Transverse colon (tissue), 4 donors: ENCODE measurements at regions of chr6 and their contacts with region 1.

Region 1: DNA sequence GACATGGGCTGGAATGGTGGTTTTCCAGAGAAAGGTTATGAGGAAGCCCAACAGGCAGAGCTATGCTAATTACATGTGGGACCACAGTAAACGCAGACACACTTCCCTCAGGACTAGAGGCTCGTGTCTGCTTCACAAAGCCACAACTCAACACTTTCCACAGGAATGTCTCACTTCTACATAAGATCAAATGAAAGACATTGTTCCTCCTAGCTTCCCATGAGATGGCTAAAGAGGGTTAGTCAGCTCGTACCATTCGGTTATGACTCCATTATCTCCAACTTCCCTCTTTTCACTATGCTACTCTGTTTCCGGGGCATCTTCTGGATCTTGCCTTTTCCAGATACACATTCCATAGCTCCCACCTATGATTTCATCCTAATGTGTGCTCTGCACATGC is 29.1 kb upstream of the ZC3H12D start:
- DNase-seq: no peak
- H3K4me3 ChIP-seq: no peak overlapping the region
- H3K27ac ChIP-seq: no peak overlapping the region
- H3K4me1 ChIP-seq: peaks cover 0 to 8% (median 4%) of the 10 kb centered on the region in 4 donors
- H3K27me3 ChIP-seq: no peaks in the 10 kb centered on the region
- CTCF ChIP-seq: no peak
- EP300 ChIP-seq: no peak
- POLR2A ChIP-seq: no peak

Region 2: DNA sequence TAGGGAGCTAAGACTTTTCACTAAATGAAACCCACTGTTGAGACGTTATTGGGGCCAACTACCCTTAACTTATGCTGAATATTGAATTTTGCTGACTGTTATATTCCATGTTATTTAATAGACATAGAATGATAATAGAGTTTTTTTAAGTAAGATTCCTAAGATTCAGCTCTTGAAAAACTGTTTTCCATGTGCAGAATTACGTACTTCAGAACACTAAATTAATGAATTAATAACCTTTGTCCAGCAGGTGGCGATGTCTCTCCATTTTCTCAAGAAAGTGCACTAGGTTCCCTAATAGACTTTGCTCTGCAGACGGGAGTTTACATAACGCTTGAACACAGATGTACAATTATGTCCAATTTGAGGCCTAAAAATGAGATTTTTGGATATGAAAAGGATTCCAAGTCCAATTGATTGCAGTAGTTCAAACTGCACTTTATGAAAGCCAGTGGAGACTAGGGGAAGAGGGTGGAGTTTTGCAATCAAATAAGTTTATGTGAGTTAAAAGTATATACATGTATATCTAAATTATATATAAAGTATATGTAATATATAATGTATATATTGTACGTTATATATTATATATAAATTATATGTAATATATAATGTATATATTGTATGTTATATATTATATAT is 485.0 kb before region 1 on chr6:
- in situ Hi-C with region 1: loop called in 1 of 4 experiments (anchors 10 kb)
- intact Hi-C with region 1: loop called (anchors 5 kb)
- DNase-seq: peak; percentile 64
- H3K4me3 ChIP-seq: no peak overlapping the region
- H3K27ac ChIP-seq: no peak overlapping the region
- H3K4me1 ChIP-seq: peaks cover 0 to 13% (median 9%) of the 10 kb centered on the region in 4 donors
- H3K27me3 ChIP-seq: no peaks in the 10 kb centered on the region
- CTCF ChIP-seq: peak; percentile 71 to 91 (median 76)
- EP300 ChIP-seq: no peak
- POLR2A ChIP-seq: no peak

Region 3: GRCh38 chr6:149082286-149082707 is 431.6 kb before region 1 on chr6:
- in situ Hi-C with region 1: loop called in 1 of 4 experiments (anchors 25 kb)
- intact Hi-C with region 1: no loop called
- DNase-seq: peak; percentile 87
- H3K4me3 ChIP-seq: no peak overlapping the region
- H3K27ac ChIP-seq: no peak overlapping the region
- H3K4me1 ChIP-seq: peaks cover 4 to 25% (median 8%) of the 10 kb centered on the region in 4 donors
- H3K27me3 ChIP-seq: no peaks in the 10 kb centered on the region
- CTCF ChIP-seq: peak; percentile 76 to 82 (median 80)
- EP300 ChIP-seq: no peak
- POLR2A ChIP-seq: no peak

Region 4: GRCh38 chr6:149094156-149094555 is 419.8 kb before region 1 on chr6:
- in situ Hi-C with region 1: loop called in 1 of 4 experiments (anchors 25 kb)
- intact Hi-C with region 1: loop called (anchors 5 kb)
- DNase-seq: no peak
- H3K4me3 ChIP-seq: no peak overlapping the region
- H3K27ac ChIP-seq: no peak overlapping the region
- H3K4me1 ChIP-seq: peaks cover 0 to 7% (median 2%) of the 10 kb centered on the region in 4 donors
- H3K27me3 ChIP-seq: no peaks in the 10 kb centered on the region
- CTCF ChIP-seq: no peak
- EP300 ChIP-seq: no peak
- POLR2A ChIP-seq: no peak

Region 5: GRCh38 chr6:149182262-149182661 is 331.7 kb before region 1 on chr6:
- in situ Hi-C with region 1: loop called in 1 of 4 experiments (anchors 10 kb)
- intact Hi-C with region 1: no loop called
- DNase-seq: peak; percentile 12
- H3K4me3 ChIP-seq: no peak overlapping the region
- H3K27ac ChIP-seq: peak overlapping the region in 3 of 4 donors; percentile 12 to 77 (median 44)
- H3K4me1 ChIP-seq: peaks cover 0 to 5% (median 0%) of the 10 kb centered on the region in 4 donors
- H3K27me3 ChIP-seq: no peaks in the 10 kb centered on the region
- CTCF ChIP-seq: no peak
- EP300 ChIP-seq: no peak
- POLR2A ChIP-seq: no peak

Region 6: DNA sequence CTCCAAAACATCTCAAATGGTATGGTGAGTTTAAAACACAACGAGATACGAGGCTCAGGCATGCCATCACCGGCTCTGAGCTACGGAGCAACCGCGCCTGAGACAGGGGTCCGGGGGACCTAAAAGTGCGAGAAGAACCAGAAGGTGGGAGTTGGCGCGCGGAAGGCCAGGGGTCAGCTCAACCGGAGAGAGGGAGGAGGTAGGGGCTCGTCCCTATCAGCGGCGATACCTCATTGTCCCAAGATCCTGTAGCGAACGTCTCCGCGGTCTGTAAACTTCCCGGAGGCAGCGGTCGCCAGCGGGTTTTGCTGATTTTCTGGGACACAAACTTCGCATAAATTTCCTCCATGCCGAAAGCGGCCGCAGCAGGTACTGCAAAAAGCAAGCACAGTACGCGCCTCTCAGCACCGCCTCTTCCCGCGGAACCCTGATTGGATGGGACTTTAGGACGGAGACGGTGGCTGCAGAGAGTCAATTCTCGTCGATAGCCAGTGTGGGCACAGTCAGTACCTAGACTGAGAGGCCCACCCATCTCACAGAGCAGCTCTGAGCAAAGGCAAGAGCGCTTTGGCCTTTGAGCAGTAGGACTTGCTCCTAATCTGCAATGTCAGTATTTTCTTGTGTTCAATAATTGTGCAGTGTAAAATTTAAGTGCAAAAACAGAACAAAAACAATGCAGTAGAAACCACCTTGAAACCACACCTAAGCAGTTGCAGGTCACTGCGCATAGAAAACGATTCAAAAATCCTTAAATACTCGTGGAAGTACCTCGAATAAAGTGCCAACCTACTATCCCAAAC is 232.4 kb after region 1 on chr6 and contains the start of gene NUP43:
- in situ Hi-C with region 1: no loop called
- intact Hi-C with region 1: no loop called
- DNase-seq: peak; percentile 94
- H3K4me3 ChIP-seq: peak within 1 kb of the TSS; percentile 60 to 75 (median 70)
- H3K27ac ChIP-seq: peak within 1 kb of the TSS; percentile 79 to 86 (median 83)
- H3K4me1 ChIP-seq: peaks cover 14 to 31% (median 23%) of the 10 kb centered on the region in 4 donors
- H3K27me3 ChIP-seq: no peaks in the 10 kb centered on the region
- CTCF ChIP-seq: peak; percentile 61 to 91 (median 70)
- EP300 ChIP-seq: no peak
- POLR2A ChIP-seq: peak; percentile 52
- total RNA-seq, gene NUP43: 14.7 to 54.3 (median 29.3) TPM